CD4-positive, alpha-beta memory T cell (primary cell): ENCODE measurements at regions of chr16 and their contacts with region 1.

Region 1: GRCh38 chr16:56931892-56932720 is at the start of gene HERPUD1:
- DNase-seq: peak; percentile 98 to 99 (median 99)
- H3K4me3 ChIP-seq: peak within 1 kb of the TSS; percentile 51 to 83
- H3K4me3 Mint-ChIP-seq: peak within 1 kb of the TSS; percentile 95 to 99 (median 98)
- H3K27ac ChIP-seq: peak within 1 kb of the TSS; percentile 96
- H3K27ac Mint-ChIP-seq: peak within 1 kb of the TSS; percentile 95 to 99 (median 98)
- H3K4me1 ChIP-seq: peaks cover 48% of the 10 kb centered on the region
- H3K4me1 Mint-ChIP-seq: peaks cover 23 to 52% (median 37%) of the 10 kb centered on the region in 4 donors
- H3K27me3 ChIP-seq: no peaks in the 10 kb centered on the region
- H3K27me3 Mint-ChIP-seq: no peaks in the 10 kb centered on the region
- total RNA-seq, gene HERPUD1: 130 to 136 TPM

Region 2: GRCh38 chr16:56729735-56730662 is 202.1 kb before region 1 on chr16 and contains the start of gene NUP93:
- CTCF ChIA-PET with region 1: no interaction called
- POLR2A ChIA-PET with region 1: no interaction called
- intact Hi-C with region 1: loop called (anchors 10 kb)
- DNase-seq: peak; percentile 87 to 92 (median 89)
- H3K4me3 ChIP-seq: peak within 1 kb of the TSS; percentile 76 to 81
- H3K4me3 Mint-ChIP-seq: peak within 1 kb of the TSS in 4 of 8 donors; percentile 85 to 95 (median 93)
- H3K27ac ChIP-seq: peak within 1 kb of the TSS; percentile 70
- H3K27ac Mint-ChIP-seq: peak within 1 kb of the TSS in 6 of 7 donors; percentile 82 to 98 (median 96)
- H3K4me1 ChIP-seq: peaks cover 35% of the 10 kb centered on the region
- H3K4me1 Mint-ChIP-seq: peaks cover 13 to 36% (median 14%) of the 10 kb centered on the region in 4 donors
- H3K27me3 ChIP-seq: no peaks in the 10 kb centered on the region
- H3K27me3 Mint-ChIP-seq: no peaks in the 10 kb centered on the region
- total RNA-seq, gene NUP93: 48.0 to 56.5 TPM

Region 3: GRCh38 chr16:56807011-56807675 is 125.0 kb before region 1 on chr16:
- CTCF ChIA-PET with region 1: no interaction called
- POLR2A ChIA-PET with region 1: no interaction called
- intact Hi-C with region 1: no loop called
- DNase-seq: no peak
- H3K4me3 ChIP-seq: no peak overlapping the region
- H3K4me3 Mint-ChIP-seq: no peak overlapping the region
- H3K27ac ChIP-seq: no peak overlapping the region
- H3K27ac Mint-ChIP-seq: no peak overlapping the region
- H3K4me1 ChIP-seq: no peaks in the 10 kb centered on the region
- H3K4me1 Mint-ChIP-seq: no peaks in the 10 kb centered on the region
- H3K27me3 ChIP-seq: no peaks in the 10 kb centered on the region
- H3K27me3 Mint-ChIP-seq: no peaks in the 10 kb centered on the region

Region 4: DNA sequence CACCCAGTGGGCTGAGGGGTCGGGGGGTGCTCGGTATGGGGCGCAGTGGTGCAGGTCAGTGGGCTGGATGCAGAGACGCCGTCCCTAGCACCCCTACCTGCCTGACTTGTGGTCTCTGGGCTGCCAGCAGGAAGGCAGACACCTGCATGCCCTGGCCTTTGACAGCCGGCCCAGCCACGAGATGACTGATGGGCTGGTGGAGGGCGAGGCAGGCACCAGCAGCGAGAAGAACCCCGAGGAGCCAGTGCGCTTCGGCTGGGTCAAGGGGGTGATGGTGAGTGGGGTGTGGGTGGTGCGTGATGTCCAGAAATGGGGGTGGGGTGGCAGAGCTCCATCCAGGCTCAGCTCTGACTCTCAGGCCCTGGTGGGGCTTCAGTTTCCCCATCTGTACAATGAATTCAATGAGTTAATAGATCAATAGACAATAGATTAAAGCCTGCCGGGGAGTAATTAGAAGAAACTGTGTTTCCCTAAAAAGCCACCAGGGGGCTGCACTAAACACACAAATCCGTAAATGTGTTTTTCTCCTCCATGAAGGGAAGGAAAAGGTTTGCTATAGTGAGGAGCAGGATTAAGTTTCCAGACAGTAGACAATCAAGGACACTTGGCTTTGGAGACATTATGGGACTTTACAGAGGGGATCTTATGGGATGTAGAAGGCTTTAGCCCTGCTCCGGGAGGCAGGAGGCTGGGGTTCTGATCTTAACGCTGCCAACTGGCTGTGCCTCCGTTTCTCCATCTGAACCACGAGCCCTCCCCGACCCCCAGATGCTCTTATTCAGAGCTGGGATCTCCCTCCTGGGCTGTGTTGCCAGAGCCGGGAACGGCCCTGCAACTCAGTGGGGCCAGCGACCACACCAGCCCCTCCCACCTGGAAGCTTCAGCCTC is 64.9 kb before region 1 on chr16:
- CTCF ChIA-PET with region 1: interaction called, 7 read pairs
- POLR2A ChIA-PET with region 1: interaction called, 12 read pairs
- intact Hi-C with region 1: loop called (anchors 1 kb)
- DNase-seq: peak in 4 of 5 donors; percentile 50 to 56 (median 56)
- H3K4me3 ChIP-seq: no peak overlapping the region
- H3K4me3 Mint-ChIP-seq: peak overlapping the region in 1 of 8 donors; percentile 49
- H3K27ac ChIP-seq: no peak overlapping the region
- H3K27ac Mint-ChIP-seq: peak overlapping the region in 5 of 7 donors; percentile 1 to 72 (median 30)
- H3K4me1 ChIP-seq: peaks cover 22% of the 10 kb centered on the region
- H3K4me1 Mint-ChIP-seq: peaks cover 14 to 24% (median 18%) of the 10 kb centered on the region in 4 donors
- H3K27me3 ChIP-seq: no peaks in the 10 kb centered on the region
- H3K27me3 Mint-ChIP-seq: no peaks in the 10 kb centered on the region

Region 5: DNA sequence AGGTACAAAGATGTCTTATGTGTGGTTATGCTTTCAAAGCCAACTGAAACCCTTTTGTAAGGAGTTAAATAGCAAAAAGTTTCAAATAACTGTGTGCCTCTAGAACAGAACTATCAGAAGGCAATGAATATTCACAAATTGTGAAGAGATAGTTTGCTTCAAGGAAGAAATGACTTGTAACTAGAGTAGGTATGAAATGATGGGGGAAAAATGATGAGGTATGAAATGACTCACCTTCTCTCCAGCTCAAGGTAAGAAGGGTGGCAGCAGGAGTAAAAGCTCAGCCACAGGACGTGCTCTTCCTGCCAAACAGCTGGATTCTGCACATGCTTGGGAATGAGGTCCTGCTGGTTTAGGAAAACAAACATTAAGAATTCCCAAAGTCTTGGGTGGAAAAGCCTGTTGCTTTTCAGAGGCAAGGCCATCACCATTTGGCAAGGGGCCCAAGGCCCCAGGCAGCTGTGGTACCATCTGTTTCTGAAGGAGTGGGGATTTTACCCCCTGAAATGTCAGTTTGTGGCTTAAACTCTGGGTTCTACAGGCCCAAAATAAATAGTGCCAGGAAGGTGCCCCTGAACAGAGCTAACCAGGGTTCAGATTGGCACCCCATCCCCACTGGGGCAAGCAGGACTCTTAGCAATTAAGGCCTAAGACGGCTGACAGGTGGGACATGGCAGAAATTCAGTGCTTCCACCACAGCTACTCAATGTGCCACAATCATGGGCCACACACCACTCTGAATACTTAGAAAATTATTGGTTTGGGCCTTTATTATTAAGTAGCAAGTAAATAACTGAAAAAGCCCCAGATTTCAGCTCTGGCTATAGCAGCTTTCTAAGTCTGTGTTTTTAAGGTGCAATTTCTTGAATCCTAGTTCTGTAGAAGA is 13.1 kb after region 1 on chr16:
- CTCF ChIA-PET with region 1: no interaction called
- POLR2A ChIA-PET with region 1: interaction called, 51 read pairs
- intact Hi-C with region 1: no loop called
- DNase-seq: no peak
- H3K4me3 ChIP-seq: no peak overlapping the region
- H3K4me3 Mint-ChIP-seq: no peak overlapping the region
- H3K27ac ChIP-seq: no peak overlapping the region
- H3K27ac Mint-ChIP-seq: peak overlapping the region in 6 of 7 donors; percentile 9 to 85 (median 52)
- H3K4me1 ChIP-seq: no peaks in the 10 kb centered on the region
- H3K4me1 Mint-ChIP-seq: peaks cover 3 to 14% (median 8%) of the 10 kb centered on the region in 4 donors
- H3K27me3 ChIP-seq: no peaks in the 10 kb centered on the region
- H3K27me3 Mint-ChIP-seq: no peaks in the 10 kb centered on the region

Region 6: DNA sequence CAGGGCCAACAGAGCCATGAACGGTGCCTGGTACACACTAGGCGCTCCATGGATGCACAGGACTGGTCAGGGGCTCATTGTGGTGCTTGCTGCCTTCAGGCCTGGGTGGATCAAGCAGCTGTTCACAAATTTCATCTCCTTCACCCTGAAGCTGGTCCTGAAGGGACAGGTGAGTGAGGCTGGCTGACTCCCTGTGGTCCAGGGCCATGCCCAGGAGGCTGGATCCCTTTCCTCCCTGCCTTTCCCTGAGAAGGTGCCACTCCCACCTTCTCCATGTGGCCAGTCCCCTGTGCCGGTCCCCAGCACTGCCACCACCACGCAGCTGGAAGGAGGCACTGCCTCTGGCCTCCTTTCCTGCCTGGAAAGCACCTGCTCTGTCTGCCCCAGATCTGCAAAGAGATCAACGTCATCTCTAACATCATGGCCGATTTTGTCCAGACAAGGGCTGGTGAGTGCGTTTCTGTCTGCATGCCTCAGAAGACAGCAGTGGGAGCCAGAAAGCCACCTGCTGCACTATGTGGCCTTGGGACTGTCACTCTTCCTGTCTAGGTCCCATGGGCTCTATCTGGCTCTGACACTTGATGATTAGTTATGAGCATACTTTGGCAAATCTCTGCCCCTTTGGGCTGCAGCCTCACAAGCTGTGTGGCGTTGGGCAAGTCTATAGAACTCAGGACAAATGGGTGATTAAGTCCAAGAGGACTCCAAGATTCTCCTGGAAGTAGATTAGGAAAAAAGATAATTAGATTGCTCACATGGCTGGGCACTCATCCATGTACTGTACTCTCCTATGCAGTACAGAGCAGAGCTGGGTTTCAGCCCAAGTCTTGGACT is 39.0 kb after region 1 on chr16:
- CTCF ChIA-PET with region 1: no interaction called
- POLR2A ChIA-PET with region 1: interaction called, 14 read pairs
- intact Hi-C with region 1: no loop called
- DNase-seq: peak in 3 of 5 donors; percentile 28 to 67 (median 41)
- H3K4me3 ChIP-seq: no peak overlapping the region
- H3K4me3 Mint-ChIP-seq: peak overlapping the region in 2 of 8 donors; percentile 59
- H3K27ac ChIP-seq: no peak overlapping the region
- H3K27ac Mint-ChIP-seq: peak overlapping the region; percentile 18 to 89 (median 73)
- H3K4me1 ChIP-seq: peaks cover 26% of the 10 kb centered on the region
- H3K4me1 Mint-ChIP-seq: peaks cover 19 to 50% (median 30%) of the 10 kb centered on the region in 4 donors
- H3K27me3 ChIP-seq: no peaks in the 10 kb centered on the region
- H3K27me3 Mint-ChIP-seq: no peaks in the 10 kb centered on the region

Region 7: DNA sequence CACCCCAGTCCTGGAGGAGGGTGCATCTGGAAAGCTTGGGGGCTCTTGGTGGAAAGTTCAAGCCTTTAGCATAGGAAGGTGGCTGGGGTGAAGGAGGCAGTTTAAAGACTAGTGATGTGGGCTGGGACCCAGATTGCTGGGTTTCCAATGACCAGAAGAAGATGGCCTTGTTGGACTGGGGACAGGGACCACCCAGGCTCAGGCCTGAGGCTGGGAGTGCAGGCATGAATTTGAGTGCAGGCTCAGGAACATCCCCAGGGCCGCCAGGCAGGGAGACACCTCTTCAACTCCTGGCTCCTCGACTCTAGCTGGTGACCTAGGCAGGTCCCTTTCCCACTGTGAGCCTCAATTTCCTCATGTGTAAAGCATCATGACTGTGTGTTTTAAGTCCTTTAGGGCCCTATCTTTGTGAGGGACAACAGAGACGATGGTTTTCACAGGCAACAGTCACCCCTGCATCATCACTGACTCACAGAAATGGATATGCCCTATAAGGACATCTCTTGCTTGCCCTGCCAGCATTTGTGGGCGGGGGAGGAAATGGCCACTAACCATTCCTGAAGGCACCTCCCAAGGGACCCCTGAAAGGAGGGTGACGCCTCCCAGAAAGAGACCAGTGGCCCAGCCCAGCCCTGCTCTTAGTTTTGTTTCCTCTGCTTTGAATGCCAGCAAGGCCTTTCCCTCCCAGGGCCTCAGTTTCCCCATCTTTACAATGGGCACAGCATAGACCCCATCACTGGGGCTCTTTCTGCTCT is 68.3 kb after region 1 on chr16:
- CTCF ChIA-PET with region 1: no interaction called
- POLR2A ChIA-PET with region 1: interaction called, 13 read pairs
- intact Hi-C with region 1: no loop called
- DNase-seq: peak in 1 of 5 donors; percentile 77
- H3K4me3 ChIP-seq: peak overlapping the region; percentile 36 to 66
- H3K4me3 Mint-ChIP-seq: peak overlapping the region; percentile 71 to 90 (median 81)
- H3K27ac ChIP-seq: peak overlapping the region; percentile 79
- H3K27ac Mint-ChIP-seq: peak overlapping the region; percentile 89 to 98 (median 97)
- H3K4me1 ChIP-seq: peaks cover 95% of the 10 kb centered on the region
- H3K4me1 Mint-ChIP-seq: peaks cover 69 to 99% (median 84%) of the 10 kb centered on the region in 4 donors
- H3K27me3 ChIP-seq: no peaks in the 10 kb centered on the region
- H3K27me3 Mint-ChIP-seq: no peaks in the 10 kb centered on the region

Region 8: GRCh38 chr16:57185944-57186871 is 254.1 kb after region 1 on chr16 and contains the starts of genes PSME3IP1 and RSPRY1:
- CTCF ChIA-PET with region 1: no interaction called
- POLR2A ChIA-PET with region 1: interaction called, 15 read pairs
- intact Hi-C with region 1: loop called (anchors 1 kb)
- DNase-seq: peak; percentile 99 to 100 (median 100)
- H3K4me3 ChIP-seq: peak within 1 kb of the TSS; percentile 88
- H3K4me3 Mint-ChIP-seq: peak within 1 kb of the TSS; percentile 97 to 99 (median 99)
- H3K27ac ChIP-seq: peak within 1 kb of the TSS; percentile 87
- H3K27ac Mint-ChIP-seq: peak within 1 kb of the TSS; percentile 95 to 99 (median 97)
- H3K4me1 ChIP-seq: peaks cover 45% of the 10 kb centered on the region
- H3K4me1 Mint-ChIP-seq: peaks cover 36 to 60% (median 48%) of the 10 kb centered on the region in 4 donors
- H3K27me3 ChIP-seq: no peaks in the 10 kb centered on the region
- H3K27me3 Mint-ChIP-seq: no peaks in the 10 kb centered on the region
- total RNA-seq, gene PSME3IP1: 147 to 157 TPM
- total RNA-seq, gene RSPRY1: 32.8 to 38.0 TPM